HCT116 (cell line): ENCODE measurements at regions of chr15 and their contacts with region 1.

Region 1: DNA sequence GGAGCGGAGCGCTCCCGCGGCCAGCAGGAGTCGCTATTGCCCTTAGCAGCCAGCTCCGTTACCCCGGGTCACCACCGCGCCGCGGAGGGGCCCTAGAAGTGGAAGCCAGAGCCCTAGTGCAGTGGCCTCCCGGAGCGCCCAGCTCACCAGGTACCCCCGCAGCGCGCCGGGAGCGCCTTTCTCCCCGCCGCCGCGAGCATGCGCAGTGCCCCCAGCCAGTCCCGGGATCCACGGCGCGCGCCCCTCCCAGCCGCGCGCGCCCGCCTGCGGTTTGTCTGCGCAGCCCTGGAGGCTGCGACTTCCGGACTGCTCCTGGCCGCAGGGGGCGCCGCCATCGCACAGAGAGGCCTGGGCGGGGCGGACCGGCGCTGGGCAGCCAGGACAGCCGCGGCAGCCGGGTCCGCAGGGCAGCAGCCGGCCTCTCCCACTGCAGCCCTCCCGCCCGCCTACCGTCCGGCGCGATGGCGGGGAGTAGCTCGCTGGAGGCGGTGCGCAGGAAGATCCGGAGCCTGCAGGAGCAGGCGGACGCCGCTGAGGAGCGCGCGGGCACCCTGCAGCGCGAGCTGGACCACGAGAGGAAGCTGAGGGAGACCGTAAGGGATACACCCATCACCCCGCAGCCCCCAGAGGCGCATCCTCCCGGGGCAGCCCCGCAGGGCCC is 5.7 kb downstream of the TPM1 start:
- DNase-seq: peak; percentile 70
- ATAC-seq: peak; percentile 93
- H3K4me3 ChIP-seq: peak overlapping the region; percentile 68 to 77
- H3K27ac ChIP-seq: peak overlapping the region; percentile 51
- H3K4me1 ChIP-seq: peaks cover 13 to 38% of the 10 kb centered on the region in 2 experiments
- H3K27me3 ChIP-seq: no peaks in the 10 kb centered on the region
- CTCF ChIP-seq: peak; percentile 67 to 98 (median 89); a peak in 5 of 6 replicates
- POLR2A ChIP-seq: no peak
- RAD21 ChIP-seq: peak; percentile 69

Region 2: DNA sequence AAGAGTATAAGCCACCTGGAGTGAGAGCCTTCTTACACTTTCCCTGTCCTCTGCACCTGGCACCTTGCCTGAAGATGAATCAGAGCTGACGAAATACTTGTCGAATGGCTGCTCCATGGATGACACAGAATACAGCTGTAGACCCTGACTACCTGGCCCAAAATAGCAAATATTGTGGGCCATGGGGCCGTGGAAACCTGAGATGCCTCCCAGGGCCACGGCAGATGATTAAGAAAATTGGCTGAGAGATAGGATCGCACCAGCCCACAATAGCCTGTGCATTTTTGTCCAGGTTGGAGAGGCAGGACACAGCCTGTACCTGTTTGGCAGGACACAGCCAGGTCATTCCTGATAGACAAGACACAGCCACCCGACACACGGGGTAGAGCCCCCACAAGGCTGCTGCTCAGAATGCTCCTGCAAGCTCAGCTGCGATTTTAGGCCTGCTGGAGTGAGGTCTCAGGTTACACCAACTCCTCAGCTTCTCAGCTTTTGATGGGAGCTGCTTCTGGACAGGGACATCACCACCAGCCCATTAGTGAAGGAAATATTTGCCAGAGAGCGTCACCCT is 28.6 kb before region 1 on chr15:
- CTCF ChIA-PET with region 1: interaction called, 21 read pairs
- POLR2A ChIA-PET with region 1: interaction called, 6 read pairs
- RAD21 ChIA-PET with region 1: no interaction called
- intact Hi-C with region 1: no loop called
- DNase-seq: peak; percentile 78
- ATAC-seq: peak; percentile 89
- H3K4me3 ChIP-seq: peak overlapping the region in 1 of 2 experiments; percentile 12; a peak in 1 of 4 replicates
- H3K27ac ChIP-seq: peak overlapping the region; percentile 15; the same call in 1 of the 2 replicates
- H3K4me1 ChIP-seq: peaks cover 25 to 39% of the 10 kb centered on the region in 2 experiments
- H3K27me3 ChIP-seq: no peaks in the 10 kb centered on the region
- CTCF ChIP-seq: no peak
- POLR2A ChIP-seq: no peak
- RAD21 ChIP-seq: no peak

Region 3: DNA sequence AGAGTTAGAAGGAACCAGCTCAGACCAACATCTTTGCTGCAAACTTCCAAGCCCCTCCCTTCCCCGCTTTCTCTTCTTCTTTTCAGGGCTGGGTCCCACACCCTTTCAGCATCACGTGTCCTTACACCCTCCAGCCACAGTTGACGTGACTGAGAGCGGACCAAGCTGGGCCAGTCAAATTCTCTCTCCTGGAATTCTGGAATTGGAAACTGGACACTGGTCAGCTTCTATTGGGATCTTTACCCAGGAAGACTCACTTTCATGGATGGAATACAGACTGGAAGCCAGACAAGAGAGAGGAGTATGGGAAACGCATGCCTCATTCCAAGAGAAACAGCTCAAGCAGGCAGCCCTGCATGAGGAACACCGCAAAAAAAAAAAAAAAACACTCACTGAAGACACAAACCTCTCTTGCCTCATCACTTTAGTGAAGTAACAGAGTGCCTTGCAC is 18.1 kb before region 1 on chr15:
- CTCF ChIA-PET with region 1: interaction called, 22 read pairs
- POLR2A ChIA-PET with region 1: no interaction called
- RAD21 ChIA-PET with region 1: no interaction called
- intact Hi-C with region 1: no loop called
- DNase-seq: no peak
- ATAC-seq: no peak
- H3K4me3 ChIP-seq: no peak overlapping the region
- H3K27ac ChIP-seq: no peak overlapping the region
- H3K4me1 ChIP-seq: no peaks in the 10 kb centered on the region
- H3K27me3 ChIP-seq: no peaks in the 10 kb centered on the region
- CTCF ChIP-seq: no peak
- POLR2A ChIP-seq: no peak
- RAD21 ChIP-seq: no peak

Region 4: GRCh38 chr15:63065262-63066221 is 17.3 kb after region 1 on chr15:
- CTCF ChIA-PET with region 1: interaction called, 19 read pairs
- POLR2A ChIA-PET with region 1: no interaction called
- RAD21 ChIA-PET with region 1: no interaction called
- intact Hi-C with region 1: no loop called
- DNase-seq: no peak
- ATAC-seq: no peak
- H3K4me3 ChIP-seq: no peak overlapping the region
- H3K27ac ChIP-seq: no peak overlapping the region
- H3K4me1 ChIP-seq: no peaks in the 10 kb centered on the region
- H3K27me3 ChIP-seq: no peaks in the 10 kb centered on the region
- CTCF ChIP-seq: no peak
- POLR2A ChIP-seq: no peak
- RAD21 ChIP-seq: no peak

Region 5: GRCh38 chr15:63093486-63094205 is 45.4 kb after region 1 on chr15:
- CTCF ChIA-PET with region 1: interaction called, 18 read pairs
- POLR2A ChIA-PET with region 1: no interaction called
- RAD21 ChIA-PET with region 1: interaction called in 1 of 2 experiments, 3 read pairs
- intact Hi-C with region 1: loop called (anchors 1 kb)
- DNase-seq: peak; percentile 65
- ATAC-seq: peak; percentile 100
- H3K4me3 ChIP-seq: no peak overlapping the region
- H3K27ac ChIP-seq: no peak overlapping the region
- H3K4me1 ChIP-seq: no peaks in the 10 kb centered on the region
- H3K27me3 ChIP-seq: no peaks in the 10 kb centered on the region
- CTCF ChIP-seq: peak; percentile 84 to 94 (median 89)
- POLR2A ChIP-seq: no peak
- RAD21 ChIP-seq: peak; percentile 96

Region 6: DNA sequence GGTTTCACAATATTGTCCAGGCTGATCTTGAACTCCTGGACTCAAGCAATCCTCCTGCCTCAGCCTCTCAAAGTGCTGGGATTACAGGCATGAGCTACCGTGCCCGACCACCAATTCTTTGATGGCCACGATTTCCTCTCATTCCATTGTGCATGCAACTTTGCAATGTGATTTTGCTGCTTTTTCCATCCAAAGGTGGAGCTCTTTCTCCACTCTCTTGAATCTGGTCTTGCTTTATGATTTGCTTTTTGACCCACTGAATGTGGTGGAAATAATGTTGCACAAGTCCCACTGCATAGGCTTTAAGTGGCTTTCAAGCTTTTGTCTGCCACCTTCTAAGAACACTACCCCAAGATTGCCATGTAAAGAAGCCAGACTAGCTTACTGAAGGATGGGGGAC is 98.4 kb after region 1 on chr15:
- CTCF ChIA-PET with region 1: no interaction called
- POLR2A ChIA-PET with region 1: no interaction called
- RAD21 ChIA-PET with region 1: no interaction called
- intact Hi-C with region 1: no loop called
- DNase-seq: no peak
- ATAC-seq: no peak
- H3K4me3 ChIP-seq: no peak overlapping the region
- H3K27ac ChIP-seq: no peak overlapping the region
- H3K4me1 ChIP-seq: no peaks in the 10 kb centered on the region
- H3K27me3 ChIP-seq: no peaks in the 10 kb centered on the region
- CTCF ChIP-seq: no peak
- POLR2A ChIP-seq: no peak
- RAD21 ChIP-seq: no peak

Region 7: DNA sequence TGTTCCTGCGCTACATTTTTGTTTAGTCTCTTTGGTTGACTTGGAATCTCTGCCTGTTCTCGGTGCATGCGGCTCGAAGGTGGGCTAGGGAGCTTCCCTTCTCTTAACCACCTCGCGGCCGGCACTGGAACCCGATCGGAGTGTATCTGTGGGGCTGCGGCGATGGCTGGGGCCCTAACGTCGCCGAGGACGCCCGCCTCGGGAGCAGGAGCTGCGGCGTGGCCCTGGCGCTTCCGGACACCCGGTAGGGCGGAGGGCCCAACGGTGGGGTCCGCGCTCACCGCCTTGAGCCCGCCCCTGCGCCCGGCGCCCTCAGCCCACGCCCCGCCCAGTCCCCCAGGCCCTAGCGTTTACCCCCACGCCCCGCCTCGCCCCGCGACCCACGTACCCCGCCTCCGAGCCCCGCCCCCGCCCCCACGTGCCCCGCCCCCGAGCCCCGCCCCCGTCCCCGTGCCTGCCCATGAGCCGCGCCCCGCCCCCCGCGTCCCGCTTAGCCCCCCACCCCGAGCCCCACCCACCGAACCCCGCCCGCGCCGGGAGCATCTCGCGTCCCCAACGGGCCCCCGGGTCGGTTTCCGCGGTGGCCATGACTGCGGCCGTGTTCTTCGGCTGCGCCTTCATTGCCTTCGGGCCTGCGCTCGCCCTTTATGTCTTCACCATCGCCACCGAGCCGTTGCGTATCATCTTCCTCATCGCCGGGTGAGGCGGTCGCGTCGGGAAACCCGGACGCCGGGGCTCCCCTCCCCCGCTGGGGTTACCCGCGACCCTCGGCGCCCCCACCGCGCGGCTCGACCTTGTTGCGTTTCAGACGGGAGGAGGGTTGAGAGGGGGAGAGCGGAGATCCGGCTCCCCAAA is 229.0 kb after region 1 on chr15 and contains the start of gene APH1B:
- CTCF ChIA-PET with region 1: interaction called, 3 read pairs
- POLR2A ChIA-PET with region 1: no interaction called
- RAD21 ChIA-PET with region 1: no interaction called
- intact Hi-C with region 1: loop called (anchors 10 kb)
- DNase-seq: no peak
- ATAC-seq: peak; percentile 91
- H3K4me3 ChIP-seq: peak within 1 kb of the TSS; percentile 63 to 75
- H3K27ac ChIP-seq: peak within 1 kb of the TSS; percentile 27; the same call in 1 of the 2 replicates
- H3K4me1 ChIP-seq: peaks cover 3 to 14% of the 10 kb centered on the region in 2 experiments; a peak in 3 of 4 replicates
- H3K27me3 ChIP-seq: no peaks in the 10 kb centered on the region
- CTCF ChIP-seq: no peak
- POLR2A ChIP-seq: peak; percentile 35
- RAD21 ChIP-seq: no peak
- total RNA-seq, gene APH1B: 8.5 TPM

Region 8: DNA sequence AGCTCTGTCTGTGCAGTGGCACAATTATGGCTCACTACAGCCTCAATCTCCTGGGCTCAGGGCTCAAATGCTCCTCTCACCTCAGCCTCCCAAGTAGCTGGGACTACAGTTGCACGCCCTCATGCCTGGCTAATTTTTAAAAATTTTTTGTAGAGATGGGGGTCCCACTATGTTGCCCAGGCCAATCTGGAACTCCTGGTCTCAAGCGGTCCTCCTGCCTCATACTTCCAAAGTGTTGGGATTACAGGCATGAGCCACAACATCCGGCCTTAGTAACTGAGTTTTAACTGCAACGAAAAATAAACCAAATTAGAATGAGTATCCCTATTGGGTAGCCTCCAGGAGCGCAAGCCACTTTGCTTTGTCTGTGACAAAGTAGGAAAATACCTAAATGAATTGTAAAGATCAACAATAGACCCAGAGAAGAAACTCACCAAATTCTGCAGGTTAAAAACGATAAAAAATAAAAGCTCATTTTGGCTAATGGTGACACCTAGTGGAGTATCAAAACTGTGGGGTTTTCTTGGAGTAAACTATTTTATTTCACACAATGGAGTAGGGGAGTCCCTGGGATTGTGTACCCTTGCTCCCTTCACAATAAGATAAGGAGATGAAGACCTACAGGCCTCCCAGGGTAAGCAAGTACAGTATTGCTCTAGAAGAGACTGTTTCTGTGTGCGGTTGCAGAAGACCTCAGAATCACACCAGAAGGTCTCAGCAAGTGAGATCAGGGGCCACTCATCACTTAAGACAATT is 354.4 kb after region 1 on chr15:
- CTCF ChIA-PET with region 1: interaction called, 4 read pairs
- POLR2A ChIA-PET with region 1: no interaction called
- RAD21 ChIA-PET with region 1: no interaction called
- intact Hi-C with region 1: loop called (anchors 5 kb)
- DNase-seq: no peak
- ATAC-seq: peak; percentile 86
- H3K4me3 ChIP-seq: no peak overlapping the region
- H3K27ac ChIP-seq: no peak overlapping the region
- H3K4me1 ChIP-seq: peaks cover 5 to 9% of the 10 kb centered on the region in 2 experiments; a peak in 2 of 4 replicates
- H3K27me3 ChIP-seq: no peaks in the 10 kb centered on the region
- CTCF ChIP-seq: peak; percentile 50 to 76 (median 75)
- POLR2A ChIP-seq: no peak
- RAD21 ChIP-seq: peak; percentile 84

Region 9: GRCh38 chr15:63420333-63420747 is 372.1 kb after region 1 on chr15:
- CTCF ChIA-PET with region 1: no interaction called
- POLR2A ChIA-PET with region 1: no interaction called
- RAD21 ChIA-PET with region 1: no interaction called
- intact Hi-C with region 1: no loop called
- DNase-seq: no peak
- ATAC-seq: peak; percentile 67; the same call in 1 of the 2 replicates
- H3K4me3 ChIP-seq: no peak overlapping the region
- H3K27ac ChIP-seq: no peak overlapping the region
- H3K4me1 ChIP-seq: no peaks in the 10 kb centered on the region
- H3K27me3 ChIP-seq: no peaks in the 10 kb centered on the region
- CTCF ChIP-seq: 0 out of 6 replicates have a peak, but pooled peaks of 1 of the 3 experiments have one; percentile 8
- POLR2A ChIP-seq: no peak
- RAD21 ChIP-seq: no peak